ENCODE measurements at regions of chr3 and their contacts with region 1.

Region 1: DNA sequence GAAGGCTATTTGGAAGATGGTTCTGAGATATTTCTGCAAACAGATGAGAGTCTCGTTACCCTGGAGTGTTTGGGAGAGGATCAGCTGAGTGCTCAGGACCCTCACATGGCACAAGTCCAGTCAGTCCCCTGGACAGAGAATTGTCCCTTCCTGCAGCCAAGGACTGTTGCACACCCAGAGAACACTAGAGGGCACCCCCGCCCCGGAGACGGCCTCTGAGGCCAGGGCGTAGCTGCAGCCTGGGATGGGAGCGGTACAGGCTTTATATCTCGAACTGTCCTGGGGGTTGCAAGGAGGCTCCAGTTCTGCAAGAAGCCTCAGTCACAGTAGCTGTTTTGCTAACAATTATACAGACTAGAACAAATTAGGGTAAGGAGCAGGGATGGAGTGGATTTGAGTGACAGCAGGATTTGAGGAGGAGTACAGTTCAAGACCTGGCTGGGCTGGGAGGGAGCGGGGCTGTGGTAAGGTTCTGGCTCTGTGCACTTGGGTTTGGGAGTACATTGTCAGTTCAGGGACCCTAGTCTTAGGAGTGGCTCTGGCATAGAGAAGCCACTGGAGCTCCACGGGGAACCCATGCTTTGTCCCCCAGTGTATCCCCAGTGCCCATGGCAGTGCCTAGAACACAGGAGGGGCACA is 67.6 kb upstream of the HACD2 start:
- DNase-seq: peak; percentile 87
- ATAC-seq: peak; percentile 94
- H3K4me3 ChIP-seq: no peak overlapping the region
- H3K27ac ChIP-seq: no peak overlapping the region
- H3K4me1 ChIP-seq: 0 out of 2 replicates have a peak, but pooled peaks cover under 1% of the 10 kb centered on the region
- H3K27me3 ChIP-seq: no peaks in the 10 kb centered on the region
- CTCF ChIP-seq: peak; percentile 99

Region 2: GRCh38 chr3:123702720-123703119 is 50.3 kb after region 1 on chr3:
- CTCF ChIA-PET with region 1: interaction called, 14 read pairs
- POLR2A ChIA-PET with region 1: no interaction called
- intact Hi-C with region 1: loop called (anchors 1 kb)
- DNase-seq: no peak
- ATAC-seq: no peak
- H3K4me3 ChIP-seq: no peak overlapping the region
- H3K27ac ChIP-seq: no peak overlapping the region
- H3K4me1 ChIP-seq: no peaks in the 10 kb centered on the region; the same call in 1 of the 2 replicates
- H3K27me3 ChIP-seq: no peaks in the 10 kb centered on the region
- CTCF ChIP-seq: no peak

Region 3: GRCh38 chr3:123723522-123724168 is 71.2 kb after region 1 on chr3:
- CTCF ChIA-PET with region 1: interaction called, 11 read pairs
- POLR2A ChIA-PET with region 1: no interaction called
- intact Hi-C with region 1: loop called (anchors 1 kb)
- DNase-seq: peak; percentile 96
- ATAC-seq: peak; percentile 71
- H3K4me3 ChIP-seq: no peak overlapping the region
- H3K27ac ChIP-seq: no peak overlapping the region
- H3K4me1 ChIP-seq: no peaks in the 10 kb centered on the region
- H3K27me3 ChIP-seq: no peaks in the 10 kb centered on the region
- CTCF ChIP-seq: peak; percentile 95

Region 4: DNA sequence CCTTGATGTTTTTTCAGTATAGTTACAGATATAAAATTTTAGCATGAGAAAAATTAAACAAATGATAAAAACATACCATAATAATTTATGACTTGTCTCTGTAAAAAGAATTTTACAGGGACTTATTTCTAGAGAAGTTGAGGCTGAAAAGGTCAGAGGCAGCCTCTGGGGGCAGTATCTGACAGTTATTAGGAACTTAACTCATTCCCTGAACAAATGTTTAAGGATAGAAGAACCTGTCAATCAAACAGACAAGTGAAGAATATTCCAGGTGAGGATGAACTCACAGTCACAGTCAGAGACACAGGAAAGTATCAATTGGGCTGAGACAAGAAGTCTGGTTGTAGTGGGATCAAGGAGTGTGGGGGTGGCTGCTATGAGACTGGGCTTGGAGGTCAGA is 224.4 kb after region 1 on chr3:
- CTCF ChIA-PET with region 1: no interaction called
- POLR2A ChIA-PET with region 1: no interaction called
- intact Hi-C with region 1: loop called (anchors 10 kb)
- DNase-seq: peak; percentile 23
- ATAC-seq: no peak
- H3K4me3 ChIP-seq: no peak overlapping the region
- H3K27ac ChIP-seq: no peak overlapping the region
- H3K4me1 ChIP-seq: no peaks in the 10 kb centered on the region
- H3K27me3 ChIP-seq: no peaks in the 10 kb centered on the region
- CTCF ChIP-seq: peak; percentile 55

Region 5: GRCh38 chr3:123984957-123985356 is 332.5 kb after region 1 on chr3:
- CTCF ChIA-PET with region 1: interaction called, 4 read pairs
- POLR2A ChIA-PET with region 1: no interaction called
- intact Hi-C with region 1: loop called (anchors 2 kb)
- DNase-seq: no peak
- ATAC-seq: no peak
- H3K4me3 ChIP-seq: no peak overlapping the region
- H3K27ac ChIP-seq: no peak overlapping the region
- H3K4me1 ChIP-seq: 0 out of 2 replicates have a peak, but pooled peaks cover 4% of the 10 kb centered on the region
- H3K27me3 ChIP-seq: peaks cover 77% of the 10 kb centered on the region
- CTCF ChIP-seq: no peak

Measured in PC-3 (cell line).